ENCODE measurements at regions of chr20 and their contacts with region 1.

Region 1: DNA sequence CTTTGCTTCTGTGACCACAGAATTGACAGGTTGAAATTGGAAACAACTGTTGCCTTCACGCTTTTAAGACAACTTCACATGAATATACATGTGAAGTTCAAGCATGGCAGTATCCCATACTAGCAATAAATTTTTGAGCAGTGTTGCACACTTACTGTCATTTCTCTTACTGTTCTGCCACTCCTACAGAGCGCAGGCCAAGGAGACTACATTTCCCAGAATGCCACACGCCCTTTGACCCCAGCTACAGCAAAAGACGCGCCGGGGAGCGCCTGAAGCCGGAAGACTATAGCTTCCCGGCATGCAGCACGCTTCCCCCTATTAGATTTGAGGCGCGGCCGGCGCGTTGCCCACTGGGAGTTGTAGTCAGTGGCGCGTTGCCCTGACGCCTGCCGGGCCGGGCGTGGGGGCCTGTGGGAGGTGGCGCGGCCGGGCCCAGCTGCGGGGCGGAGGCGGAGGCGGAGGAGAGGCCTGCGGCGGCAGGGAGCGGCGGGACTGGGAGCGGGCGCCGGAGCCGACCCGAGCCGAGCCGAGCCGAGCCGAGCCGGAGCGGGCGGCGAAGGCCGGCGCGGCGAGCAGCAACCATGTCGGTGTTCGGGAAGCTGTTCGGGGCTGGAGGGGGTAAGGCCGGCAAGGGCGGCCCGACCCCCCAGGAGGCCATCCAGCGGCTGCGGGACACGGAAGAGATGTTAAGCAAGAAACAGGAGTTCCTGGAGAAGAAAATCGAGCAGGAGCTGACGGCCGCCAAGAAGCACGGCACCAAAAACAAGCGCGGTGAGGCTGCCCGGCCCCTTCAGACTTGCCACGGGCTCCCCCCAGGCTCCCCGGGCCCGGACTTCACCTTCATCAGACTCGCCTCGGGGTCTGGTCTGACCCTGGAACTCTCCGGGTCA is at the start of gene CHMP4B:
- DNase-seq: peak; percentile 99 to 100 (median 99)
- ATAC-seq: peak; percentile 93 to 96 (median 94)
- H3K4me3 ChIP-seq: peak within 1 kb of the TSS; percentile 79 to 94 (median 89)
- H3K27ac ChIP-seq: peak within 1 kb of the TSS; percentile 90 to 97 (median 93)
- H3K4me1 ChIP-seq: peaks cover 13 to 25% (median 23%) of the 10 kb centered on the region in 3 donors
- H3K27me3 ChIP-seq: no peaks in the 10 kb centered on the region
- CTCF ChIP-seq: no peak
- total RNA-seq, gene CHMP4B: 28.4 to 57.0 (median 37.2) TPM

Region 2: GRCh38 chr20:33875055-33875454 is 63.9 kb after region 1 on chr20:
- intact Hi-C with region 1: loop called in 1 of 3 experiments (anchors 10 kb)
- DNase-seq: no peak
- ATAC-seq: no peak
- H3K4me3 ChIP-seq: no peak overlapping the region
- H3K27ac ChIP-seq: no peak overlapping the region
- H3K4me1 ChIP-seq: no peaks in the 10 kb centered on the region
- H3K27me3 ChIP-seq: no peaks in the 10 kb centered on the region
- CTCF ChIP-seq: no peak

Region 3: DNA sequence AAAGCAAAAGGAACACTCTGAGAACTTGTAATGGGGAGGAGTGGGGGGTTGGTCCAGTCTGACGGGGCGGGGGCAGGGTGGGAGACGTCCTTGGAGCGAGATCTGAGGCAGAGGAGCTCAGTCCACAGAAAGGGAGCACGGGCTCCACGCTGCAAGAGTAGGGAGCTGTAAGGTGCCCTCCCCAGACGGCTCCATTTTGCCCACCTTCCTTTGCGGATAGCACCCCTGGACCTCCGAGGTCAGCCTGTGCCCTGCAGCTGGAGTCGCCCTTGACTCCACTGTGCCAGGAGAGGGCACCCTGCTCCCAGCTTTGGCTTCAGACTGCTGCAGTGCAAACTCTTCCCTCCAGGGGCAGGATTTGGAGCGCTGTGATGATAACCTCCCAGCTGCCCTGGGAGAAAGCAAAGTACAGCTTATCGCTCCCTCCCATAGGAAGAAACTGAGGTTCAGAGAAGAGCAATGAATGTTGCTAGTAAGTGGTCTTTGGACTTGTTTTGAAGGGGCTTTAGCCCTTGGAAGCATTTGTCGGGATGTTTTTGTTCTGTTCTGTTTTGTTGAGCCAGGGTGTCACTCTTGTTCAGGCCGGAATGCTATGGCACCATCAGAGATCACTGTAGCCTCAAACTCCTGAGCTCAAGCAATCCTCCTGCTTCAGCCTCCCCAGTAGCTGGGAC is 501.6 kb after region 1 on chr20:
- intact Hi-C with region 1: no loop called
- DNase-seq: peak; percentile 80 to 92 (median 87)
- ATAC-seq: peak; percentile 94 to 98 (median 96)
- H3K4me3 ChIP-seq: peak overlapping the region in 1 of 4 donors; percentile 29
- H3K27ac ChIP-seq: no peak overlapping the region
- H3K4me1 ChIP-seq: peaks cover 9 to 21% (median 14%) of the 10 kb centered on the region in 3 donors
- H3K27me3 ChIP-seq: no peaks in the 10 kb centered on the region
- CTCF ChIP-seq: peak; percentile 93 to 99 (median 98)

Measured in pancreas (tissue), 10 donors.